Gastrocnemius medialis (tissue), 4 donors: ENCODE measurements at regions of chr12 and their contacts with region 1.

Region 1: DNA sequence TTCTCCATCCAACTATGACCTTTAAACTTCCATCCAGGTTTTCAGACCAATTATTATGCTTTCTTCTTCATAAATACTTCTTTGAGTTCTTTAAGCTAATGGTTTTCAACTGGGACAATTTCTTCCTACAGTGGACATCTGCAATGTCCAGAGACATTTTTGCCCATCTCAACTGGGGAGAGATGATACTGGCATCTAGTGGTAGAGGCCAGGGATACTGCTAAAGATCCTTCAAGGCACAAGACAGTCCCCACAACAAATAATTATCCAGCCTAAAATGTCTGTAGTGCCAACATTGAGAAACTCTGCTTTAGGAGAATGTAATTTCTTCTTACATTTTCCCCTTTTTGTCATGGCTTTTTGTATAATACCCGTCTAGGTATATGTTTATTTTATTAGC is 10.6 kb downstream of the TRHDE start:
- DNase-seq: no peak
- ATAC-seq: no peak
- H3K4me3 ChIP-seq: no peak overlapping the region
- H3K27ac ChIP-seq: no peak overlapping the region
- H3K4me1 ChIP-seq: no peaks in the 10 kb centered on the region
- H3K27me3 ChIP-seq: peaks cover 0 to 4% (median 3%) of the 10 kb centered on the region in 3 donors
- CTCF ChIP-seq: peak in 1 of 5 experiments; percentile 12
- POLR2A ChIP-seq: no peak

Region 2: GRCh38 chr12:72017054-72017651 is 265.6 kb before region 1 on chr12:
- in situ Hi-C with region 1: no loop called
- intact Hi-C with region 1: loop called (anchors 10 kb)
- DNase-seq: peak; percentile 25 to 44
- ATAC-seq: peak; percentile 76 to 91
- H3K4me3 ChIP-seq: no peak overlapping the region
- H3K27ac ChIP-seq: no peak overlapping the region
- H3K4me1 ChIP-seq: no peaks in the 10 kb centered on the region
- H3K27me3 ChIP-seq: no peaks in the 10 kb centered on the region
- CTCF ChIP-seq: peak; percentile 40 to 74 (median 55)
- POLR2A ChIP-seq: no peak

Region 3: DNA sequence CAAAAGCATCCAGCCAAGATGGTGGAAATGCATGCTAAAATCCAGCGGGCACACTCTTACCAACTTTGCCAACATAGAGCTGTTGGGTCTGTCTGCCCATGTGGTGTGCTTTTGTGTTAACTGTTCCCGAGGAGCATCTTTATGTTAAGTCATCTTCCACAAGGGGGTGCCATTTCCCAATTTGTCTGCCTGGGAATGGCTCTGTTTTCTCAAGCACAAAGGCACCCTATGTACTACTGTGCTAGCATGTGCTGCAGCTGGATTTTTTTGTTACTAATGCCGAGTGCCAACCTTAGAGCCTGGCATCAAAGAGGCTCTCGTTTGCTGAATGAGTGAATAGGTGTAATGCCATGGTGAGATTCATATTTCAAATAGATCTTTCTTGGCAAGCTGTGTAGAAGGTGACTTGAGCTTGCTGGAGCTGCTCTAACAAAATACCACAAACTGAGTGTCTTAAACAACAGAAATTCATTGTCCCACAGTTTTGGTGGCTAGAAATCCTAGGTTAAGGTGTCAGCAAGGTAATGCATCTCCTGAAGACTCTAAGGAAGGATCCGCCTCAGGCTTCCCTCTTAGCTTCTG is 63.7 kb after region 1 on chr12:
- in situ Hi-C with region 1: no loop called
- intact Hi-C with region 1: no loop called
- DNase-seq: peak; percentile 6 to 24
- ATAC-seq: peak; percentile 75 to 80
- H3K4me3 ChIP-seq: no peak overlapping the region
- H3K27ac ChIP-seq: no peak overlapping the region
- H3K4me1 ChIP-seq: no peaks in the 10 kb centered on the region
- H3K27me3 ChIP-seq: no peaks in the 10 kb centered on the region
- CTCF ChIP-seq: peak in 3 of 5 experiments; percentile 34 to 48 (median 42)
- POLR2A ChIP-seq: no peak